CD4-positive, alpha-beta T cell (primary cell): ENCODE measurements at regions of chr12 and their contacts with region 1.

Region 1: GRCh38 chr12:76037130-76038103 is 5.8 kb upstream of the PHLDA1 start:
- DNase-seq: peak in 5 of 14 experiments; percentile 16 to 82 (median 75)
- ATAC-seq: peak; percentile 92
- H3K4me3 ChIP-seq: no peak overlapping the region
- H3K4me3 Mint-ChIP-seq: no peak overlapping the region
- H3K27ac ChIP-seq: no peak overlapping the region
- H3K27ac Mint-ChIP-seq: no peak overlapping the region
- H3K4me1 ChIP-seq: peaks cover 9% of the 10 kb centered on the region
- H3K4me1 Mint-ChIP-seq: peaks cover 14% of the 10 kb centered on the region
- H3K27me3 ChIP-seq: no peaks in the 10 kb centered on the region
- H3K27me3 Mint-ChIP-seq: no peaks in the 10 kb centered on the region
- CTCF ChIP-seq: peak; percentile 85

Region 2: GRCh38 chr12:74689071-74689655 is 1348.3 kb before region 1 on chr12:
- CTCF ChIA-PET with region 1: no interaction called
- POLR2A ChIA-PET with region 1: no interaction called
- intact Hi-C with region 1: loop called in 1 of 2 experiments (anchors 5 kb)
- DNase-seq: peak in 3 of 14 experiments; percentile 43 to 56 (median 56)
- ATAC-seq: no peak
- H3K4me3 ChIP-seq: no peak overlapping the region
- H3K4me3 Mint-ChIP-seq: no peak overlapping the region
- H3K27ac ChIP-seq: no peak overlapping the region
- H3K27ac Mint-ChIP-seq: no peak overlapping the region
- H3K4me1 ChIP-seq: no peaks in the 10 kb centered on the region
- H3K4me1 Mint-ChIP-seq: no peaks in the 10 kb centered on the region
- H3K27me3 ChIP-seq: no peaks in the 10 kb centered on the region
- H3K27me3 Mint-ChIP-seq: no peaks in the 10 kb centered on the region
- CTCF ChIP-seq: peak; percentile 49

Region 3: DNA sequence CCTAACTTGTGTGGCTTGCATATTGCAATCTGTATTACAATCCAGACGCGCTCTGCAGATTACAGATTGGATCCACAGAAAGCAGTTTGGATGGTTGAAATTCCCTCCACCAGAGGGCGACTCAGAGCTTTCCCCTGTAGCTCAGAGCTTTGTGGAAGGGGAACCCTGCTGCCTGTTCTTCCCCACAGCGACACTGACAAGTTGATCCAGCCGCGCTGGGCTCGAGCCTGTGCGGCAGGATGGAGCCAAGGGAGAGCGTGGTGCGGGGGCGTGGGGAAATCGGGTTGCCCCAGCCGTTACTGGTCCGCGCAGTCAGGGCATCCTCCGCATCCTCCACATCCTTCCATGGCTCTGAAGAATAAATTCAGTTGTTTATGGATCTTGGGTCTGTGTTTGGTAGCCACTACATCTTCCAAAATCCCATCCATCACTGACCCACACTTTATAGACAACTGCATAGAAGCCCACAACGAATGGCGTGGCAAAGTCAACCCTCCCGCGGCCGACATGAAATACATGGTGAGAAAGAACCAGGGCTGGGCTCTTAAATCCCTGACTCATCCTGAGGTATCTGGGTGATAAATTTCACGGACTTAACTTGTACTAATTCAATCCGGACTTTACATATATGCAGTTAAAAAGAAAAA is 702.9 kb before region 1 on chr12 and contains the start of gene GLIPR1L1:
- CTCF ChIA-PET with region 1: interaction called, 3 read pairs
- POLR2A ChIA-PET with region 1: no interaction called
- intact Hi-C with region 1: loop called (anchors 2 to 5 kb)
- DNase-seq: peak; percentile 67 to 90 (median 78)
- ATAC-seq: peak; percentile 79
- H3K4me3 ChIP-seq: peak within 1 kb of the TSS; percentile 39
- H3K4me3 Mint-ChIP-seq: peak within 1 kb of the TSS; percentile 57
- H3K27ac ChIP-seq: no peak within 1 kb of the TSS
- H3K27ac Mint-ChIP-seq: no peak within 1 kb of the TSS
- H3K4me1 ChIP-seq: peaks cover 17% of the 10 kb centered on the region
- H3K4me1 Mint-ChIP-seq: peaks cover 21% of the 10 kb centered on the region
- H3K27me3 ChIP-seq: peaks cover 12 to 16% of the 10 kb centered on the region in 2 experiments
- H3K27me3 Mint-ChIP-seq: peaks cover 35% of the 10 kb centered on the region
- CTCF ChIP-seq: peak; percentile 90
- total RNA-seq, gene GLIPR1L1: not detected

Region 4: DNA sequence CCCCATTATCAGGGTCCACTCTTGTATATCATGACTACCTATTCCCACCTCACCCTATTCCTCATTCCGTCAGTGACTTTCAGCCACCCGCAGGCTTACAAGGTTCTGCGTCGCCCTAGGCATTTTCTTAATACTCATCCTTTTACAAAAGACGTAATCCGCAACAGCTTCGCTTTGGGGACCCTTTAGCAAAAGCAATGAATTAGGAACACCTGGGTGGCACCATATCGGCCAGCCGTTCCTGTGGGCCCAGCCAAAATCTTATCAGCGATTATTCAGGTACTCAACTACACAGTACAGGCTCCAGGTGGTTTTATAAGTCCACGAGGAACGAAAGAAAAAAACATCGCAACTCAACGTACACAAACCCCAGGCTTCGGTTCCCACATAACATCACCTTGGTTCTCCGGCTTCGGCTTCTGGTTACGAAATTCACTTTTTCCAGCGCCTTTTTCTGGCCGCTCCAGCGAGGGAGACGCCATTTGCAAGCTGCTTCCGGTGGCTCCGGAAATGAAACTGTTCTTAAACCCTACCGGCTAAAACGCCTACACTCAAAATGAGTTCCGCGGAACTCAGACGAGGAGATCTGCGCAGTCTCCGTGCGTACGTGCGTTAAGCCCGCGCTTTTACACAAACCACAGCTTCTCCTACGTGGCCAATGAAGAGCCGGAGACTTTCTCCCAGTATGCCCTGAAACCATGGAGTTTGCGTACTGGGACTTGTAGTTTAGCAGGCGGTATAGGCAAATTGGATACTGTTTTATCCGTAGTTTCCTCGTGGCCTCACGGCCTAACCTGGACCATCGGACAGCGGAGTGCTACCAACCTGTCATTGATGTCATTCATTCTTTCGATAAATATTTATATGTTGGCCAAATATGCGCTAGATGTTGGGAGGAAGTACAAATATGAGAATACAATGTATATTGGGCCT is 526.0 kb before region 1 on chr12 and contains the start of gene KRR1:
- CTCF ChIA-PET with region 1: no interaction called
- POLR2A ChIA-PET with region 1: interaction called, 28 read pairs
- intact Hi-C with region 1: loop called (anchors 5 kb)
- DNase-seq: peak; percentile 74 to 98 (median 85)
- ATAC-seq: peak; percentile 97
- H3K4me3 ChIP-seq: peak within 1 kb of the TSS; percentile 81
- H3K4me3 Mint-ChIP-seq: peak within 1 kb of the TSS; percentile 99
- H3K27ac ChIP-seq: peak within 1 kb of the TSS; percentile 81 to 92
- H3K27ac Mint-ChIP-seq: peak within 1 kb of the TSS; percentile 95
- H3K4me1 ChIP-seq: peaks cover 8% of the 10 kb centered on the region
- H3K4me1 Mint-ChIP-seq: peaks cover 38% of the 10 kb centered on the region
- H3K27me3 ChIP-seq: no peaks in the 10 kb centered on the region
- H3K27me3 Mint-ChIP-seq: no peaks in the 10 kb centered on the region
- CTCF ChIP-seq: no peak
- total RNA-seq, gene KRR1: 144 to 148 TPM

Region 5: GRCh38 chr12:75814851-75815754 is 222.3 kb before region 1 on chr12:
- CTCF ChIA-PET with region 1: interaction called, 7 read pairs
- POLR2A ChIA-PET with region 1: interaction called, 3 read pairs
- intact Hi-C with region 1: loop called (anchors 2 to 5 kb)
- DNase-seq: peak in 4 of 14 experiments; percentile 20 to 74 (median 66)
- ATAC-seq: peak; percentile 59
- H3K4me3 ChIP-seq: no peak overlapping the region
- H3K4me3 Mint-ChIP-seq: no peak overlapping the region
- H3K27ac ChIP-seq: no peak overlapping the region
- H3K27ac Mint-ChIP-seq: peak overlapping the region; percentile 16
- H3K4me1 ChIP-seq: peaks cover 11% of the 10 kb centered on the region
- H3K4me1 Mint-ChIP-seq: peaks cover 5% of the 10 kb centered on the region
- H3K27me3 ChIP-seq: no peaks in the 10 kb centered on the region
- H3K27me3 Mint-ChIP-seq: no peaks in the 10 kb centered on the region
- CTCF ChIP-seq: no peak

Region 6: DNA sequence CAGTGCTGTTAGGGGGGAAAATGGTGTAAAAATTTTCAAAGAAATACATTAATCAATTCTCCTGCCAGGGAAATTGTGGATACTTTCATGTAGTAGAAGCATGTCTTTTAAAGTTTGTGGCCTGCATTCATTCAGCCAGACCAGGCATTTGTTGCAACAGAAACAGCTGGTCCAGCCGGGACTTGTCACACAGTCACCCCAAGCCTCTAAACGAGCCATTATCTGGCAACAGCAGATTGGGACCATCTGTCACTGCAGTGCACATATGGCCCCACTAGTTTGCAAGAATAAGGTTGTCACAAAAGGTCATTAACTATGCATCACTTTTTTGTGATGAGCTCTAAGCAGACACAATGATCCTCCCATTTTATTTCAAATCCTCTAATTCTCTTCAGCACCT is 199.7 kb before region 1 on chr12:
- CTCF ChIA-PET with region 1: no interaction called
- POLR2A ChIA-PET with region 1: no interaction called
- intact Hi-C with region 1: no loop called
- DNase-seq: no peak
- ATAC-seq: no peak
- H3K4me3 ChIP-seq: no peak overlapping the region
- H3K4me3 Mint-ChIP-seq: no peak overlapping the region
- H3K27ac ChIP-seq: no peak overlapping the region
- H3K27ac Mint-ChIP-seq: no peak overlapping the region
- H3K4me1 ChIP-seq: no peaks in the 10 kb centered on the region
- H3K4me1 Mint-ChIP-seq: no peaks in the 10 kb centered on the region
- H3K27me3 ChIP-seq: no peaks in the 10 kb centered on the region
- H3K27me3 Mint-ChIP-seq: peaks cover 6% of the 10 kb centered on the region
- CTCF ChIP-seq: no peak